ENCODE measurements at regions of chr10 and their contacts with region 1.

Region 1: DNA sequence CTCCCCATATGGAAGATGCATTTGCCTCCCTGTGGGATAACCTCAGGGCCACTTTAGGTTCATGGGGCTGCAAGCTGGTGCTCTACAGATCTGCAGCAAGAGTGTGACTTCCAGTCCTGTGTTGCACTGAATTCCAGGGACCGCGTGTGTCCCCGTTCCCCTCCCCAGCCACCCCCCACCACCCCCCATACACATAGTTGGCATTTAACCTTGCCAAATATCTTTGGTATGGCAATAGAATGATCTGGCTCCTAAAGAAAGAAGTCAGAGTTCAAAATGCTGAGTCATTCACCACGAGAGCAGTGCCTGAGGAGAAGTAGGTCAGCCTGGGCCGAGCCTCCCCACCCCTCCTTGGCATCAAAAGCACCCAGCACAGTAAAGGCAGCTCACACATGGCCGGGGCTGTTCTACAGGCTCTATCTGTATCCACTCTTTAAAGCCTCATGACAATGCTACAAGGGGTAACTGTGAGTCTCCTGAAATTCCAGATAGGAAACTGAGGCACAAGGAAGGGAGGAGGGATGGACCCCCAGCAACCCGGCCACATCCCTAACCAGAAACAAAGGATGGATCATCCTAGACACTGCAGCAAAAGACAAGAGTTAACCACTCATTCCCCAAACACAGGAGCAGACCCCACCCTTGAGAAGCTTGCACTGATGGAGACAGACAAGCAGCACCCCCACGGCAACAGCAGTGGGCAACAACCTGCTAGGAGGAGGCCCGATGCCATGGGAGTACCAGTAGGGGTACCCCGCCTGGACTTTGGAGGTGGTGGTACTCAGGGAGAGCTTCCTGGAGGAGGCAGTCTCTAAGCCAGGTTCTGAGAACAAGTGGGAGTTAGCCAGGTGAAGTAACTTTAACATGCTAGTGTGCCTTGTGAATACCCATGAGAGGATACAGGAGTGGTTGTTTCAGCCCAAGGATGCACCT is 70.3 kb upstream of the NANOS1 start:
- DNase-seq: peak; percentile 67 to 78 (median 71)
- ATAC-seq: peak; percentile 84 to 92 (median 88)
- H3K4me3 ChIP-seq: no peak overlapping the region
- H3K27ac ChIP-seq: peak overlapping the region in 10 of 12 donors; percentile 40 to 73 (median 58)
- H3K4me1 ChIP-seq: peaks cover 0 to 57% (median 20%) of the 10 kb centered on the region in 12 donors
- H3K27me3 ChIP-seq: no peaks in the 10 kb centered on the region
- CTCF ChIP-seq: no peak
- POLR2A ChIP-seq: no peak

Region 2: GRCh38 chr10:118865998-118866693 is 93.1 kb before region 1 on chr10:
- intact Hi-C with region 1: loop called in 1 of 10 experiments (anchors 5 kb)
- DNase-seq: no peak
- ATAC-seq: no peak
- H3K4me3 ChIP-seq: no peak overlapping the region
- H3K27ac ChIP-seq: no peak overlapping the region
- H3K4me1 ChIP-seq: peaks cover 0 to 22% (median 12%) of the 10 kb centered on the region in 12 donors
- H3K27me3 ChIP-seq: no peaks in the 10 kb centered on the region
- CTCF ChIP-seq: no peak
- POLR2A ChIP-seq: no peak

Region 3: GRCh38 chr10:118911361-118911760 is 47.9 kb before region 1 on chr10:
- intact Hi-C with region 1: loop called in 1 of 10 experiments (anchors 1 kb)
- DNase-seq: peak in 1 of 5 donors; percentile 43
- ATAC-seq: peak in 2 of 4 donors; percentile 16 to 52
- H3K4me3 ChIP-seq: no peak overlapping the region
- H3K27ac ChIP-seq: peak overlapping the region in 1 of 12 donors; percentile 50
- H3K4me1 ChIP-seq: peaks cover 0 to 23% (median 8%) of the 10 kb centered on the region in 12 donors
- H3K27me3 ChIP-seq: no peaks in the 10 kb centered on the region
- CTCF ChIP-seq: no peak
- POLR2A ChIP-seq: no peak

Region 4: DNA sequence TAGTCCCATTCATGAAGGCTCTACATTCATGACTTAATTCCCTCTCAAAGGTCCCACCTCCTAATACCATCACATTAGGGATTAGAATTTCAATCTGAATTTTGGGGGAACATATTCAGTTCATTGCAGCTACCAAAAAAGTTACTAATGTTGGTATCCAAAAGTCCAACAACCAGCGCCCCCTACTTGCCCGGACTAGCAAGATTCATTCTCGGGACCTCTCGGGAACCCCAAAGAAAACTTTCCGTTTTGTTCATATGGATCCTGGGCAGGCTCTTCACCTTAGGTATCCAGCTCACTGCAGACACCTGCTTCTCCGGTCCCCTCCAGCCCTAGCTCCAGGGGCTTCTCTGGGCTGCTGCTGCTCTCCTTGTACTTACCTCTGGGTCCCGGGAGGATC is 239.2 kb after region 1 on chr10:
- intact Hi-C with region 1: no loop called
- DNase-seq: no peak
- ATAC-seq: peak in 1 of 4 donors; percentile 8
- H3K4me3 ChIP-seq: no peak overlapping the region
- H3K27ac ChIP-seq: no peak overlapping the region
- H3K4me1 ChIP-seq: peaks cover 0 to 9% (median 1%) of the 10 kb centered on the region in 12 donors
- H3K27me3 ChIP-seq: no peaks in the 10 kb centered on the region
- CTCF ChIP-seq: peak in 9 of 12 donors; percentile 8 to 49 (median 16)
- POLR2A ChIP-seq: no peak